ENCODE measurements at regions of chr13 and their contacts with region 1.

Region 1: GRCh38 chr13:25375727-25376358 is 4.1 kb downstream of the ATP8A2 start:
- DNase-seq: peak in 8 of 9 donors; percentile 8 to 50 (median 30)
- ATAC-seq: peak; percentile 57
- H3K4me3 ChIP-seq: no peak overlapping the region
- H3K4me3 Mint-ChIP-seq: peak overlapping the region in 1 of 10 donors; percentile 35
- H3K27ac ChIP-seq: no peak overlapping the region
- H3K27ac Mint-ChIP-seq: no peak overlapping the region
- H3K4me1 ChIP-seq: no peaks in the 10 kb centered on the region
- H3K4me1 Mint-ChIP-seq: peaks cover 5 to 18% (median 13%) of the 10 kb centered on the region in 7 donors
- H3K27me3 ChIP-seq: peaks cover 0 to 3% of the 10 kb centered on the region in 2 donors
- H3K27me3 Mint-ChIP-seq: peaks cover 51 to 62% (median 57%) of the 10 kb centered on the region in 5 donors

Region 2: DNA sequence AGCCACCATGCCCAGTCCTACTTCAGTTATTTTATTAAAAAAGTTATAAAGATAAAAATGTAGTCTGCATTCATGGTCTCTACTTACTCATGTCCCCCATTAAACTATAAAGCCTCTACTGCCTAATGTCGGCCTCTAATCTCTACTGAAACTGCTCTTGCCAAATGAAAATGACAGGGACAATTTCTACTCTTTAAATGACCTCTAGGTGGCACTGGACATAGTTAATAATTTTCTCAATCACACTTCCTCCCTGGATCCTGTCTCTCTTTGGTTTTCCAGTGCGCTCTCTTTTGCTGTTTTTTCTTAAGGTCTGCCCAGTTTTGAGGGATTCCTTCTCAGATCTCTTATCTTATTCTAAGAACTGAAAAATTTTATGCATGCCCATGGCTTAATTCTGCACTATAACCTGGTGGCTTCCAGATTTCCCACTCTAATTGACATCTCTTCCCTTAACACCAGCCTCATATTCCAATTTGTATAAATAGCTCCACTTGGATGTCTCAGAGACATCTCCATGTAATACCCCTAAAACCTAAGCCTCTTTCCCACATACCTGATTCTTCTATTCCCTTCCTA is 142.8 kb before region 1 on chr13:
- CTCF ChIA-PET with region 1: interaction called, 8 read pairs
- POLR2A ChIA-PET with region 1: no interaction called
- intact Hi-C with region 1: loop called (anchors 1 kb)
- DNase-seq: peak in 2 of 9 donors; percentile 5 to 7
- ATAC-seq: peak; percentile 62
- H3K4me3 ChIP-seq: no peak overlapping the region
- H3K4me3 Mint-ChIP-seq: no peak overlapping the region
- H3K27ac ChIP-seq: no peak overlapping the region
- H3K27ac Mint-ChIP-seq: no peak overlapping the region
- H3K4me1 ChIP-seq: no peaks in the 10 kb centered on the region
- H3K4me1 Mint-ChIP-seq: peaks cover 0 to 8% (median 7%) of the 10 kb centered on the region in 7 donors
- H3K27me3 ChIP-seq: no peaks in the 10 kb centered on the region
- H3K27me3 Mint-ChIP-seq: peaks cover 2 to 17% (median 6%) of the 10 kb centered on the region in 5 donors

Region 3: DNA sequence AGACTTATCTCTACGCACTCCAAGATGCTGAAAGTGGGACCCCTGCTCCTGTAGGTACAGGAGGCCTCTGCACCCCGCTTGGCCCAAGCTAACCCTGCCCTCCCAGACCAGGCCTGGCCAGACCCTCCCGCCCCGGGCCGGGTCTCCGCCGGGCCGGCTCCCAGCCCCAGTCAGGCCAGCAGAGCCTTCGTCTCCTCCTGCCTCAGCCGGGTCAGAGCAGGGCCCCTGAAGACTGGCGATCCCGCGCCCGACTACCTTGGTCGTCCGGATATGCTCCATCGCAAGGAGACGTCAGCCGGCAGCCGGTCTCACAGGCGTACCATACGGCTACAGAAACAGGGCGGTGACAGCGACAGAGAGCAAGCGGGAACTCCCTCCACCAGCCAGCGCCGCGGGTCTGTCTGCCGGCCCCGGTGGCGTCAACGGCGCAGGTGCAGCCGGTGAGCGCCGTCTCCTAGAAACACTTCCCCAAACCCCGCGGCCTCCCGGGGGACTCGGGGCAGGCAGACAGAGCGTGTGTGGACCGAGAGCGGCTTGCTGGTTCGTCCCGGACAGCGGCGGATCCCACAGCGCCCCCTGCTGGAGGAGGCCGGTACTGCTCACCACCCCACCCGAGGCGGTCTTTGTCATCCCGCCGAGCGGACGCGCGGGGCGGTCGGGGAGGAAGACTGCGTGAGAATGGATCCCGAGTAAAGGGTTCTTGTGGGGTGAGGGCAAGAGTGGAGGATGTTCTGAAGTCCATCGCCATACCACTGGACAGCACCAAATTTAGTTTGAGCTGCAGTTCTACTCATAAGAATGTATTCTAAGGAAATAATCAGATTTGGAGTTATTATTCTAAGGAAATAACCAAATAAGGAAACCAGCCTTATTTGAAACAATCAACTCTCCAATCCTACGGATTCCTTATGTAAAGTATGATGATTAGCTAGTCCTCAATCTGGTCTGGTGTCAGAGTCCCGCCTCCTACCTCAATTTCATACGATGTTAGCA is 88.6 kb before region 1 on chr13 and contains the start of gene MTMR6:
- CTCF ChIA-PET with region 1: no interaction called
- POLR2A ChIA-PET with region 1: no interaction called
- intact Hi-C with region 1: no loop called
- DNase-seq: peak; percentile 90 to 98 (median 93)
- ATAC-seq: peak; percentile 96
- H3K4me3 ChIP-seq: peak within 1 kb of the TSS; percentile 85
- H3K4me3 Mint-ChIP-seq: peak within 1 kb of the TSS; percentile 94 to 100 (median 96)
- H3K27ac ChIP-seq: peak within 1 kb of the TSS; percentile 100
- H3K27ac Mint-ChIP-seq: peak within 1 kb of the TSS; percentile 92 to 99 (median 97)
- H3K4me1 ChIP-seq: peaks cover 12 to 24% of the 10 kb centered on the region in 2 donors
- H3K4me1 Mint-ChIP-seq: peaks cover 23 to 58% (median 50%) of the 10 kb centered on the region in 7 donors
- H3K27me3 ChIP-seq: peaks cover 0 to 3% of the 10 kb centered on the region in 2 donors
- H3K27me3 Mint-ChIP-seq: peaks cover 0 to 17% (median 10%) of the 10 kb centered on the region in 5 donors
- total RNA-seq, gene MTMR6: 16.0 to 23.2 (median 18.5) TPM

Region 4: DNA sequence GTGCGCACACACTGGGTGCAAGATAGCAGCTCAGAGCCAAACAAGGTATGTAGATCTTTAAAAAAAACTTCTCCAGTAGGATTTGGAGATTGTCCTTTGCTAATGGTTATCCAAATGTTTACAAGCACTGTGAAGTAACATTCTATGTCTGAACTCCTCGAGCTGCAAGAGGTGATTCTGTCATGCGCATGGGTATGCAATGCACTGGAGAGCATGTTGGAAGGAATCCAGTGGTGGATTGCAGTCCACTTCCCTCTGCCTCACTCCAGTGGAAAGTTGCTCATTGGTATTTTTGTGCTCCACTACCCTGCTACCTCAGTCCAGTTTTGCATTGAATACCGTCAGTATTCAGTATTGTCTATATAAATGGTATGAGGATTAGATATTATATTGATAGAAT is 128.0 kb after region 1 on chr13:
- CTCF ChIA-PET with region 1: no interaction called
- POLR2A ChIA-PET with region 1: no interaction called
- intact Hi-C with region 1: no loop called
- DNase-seq: no peak
- ATAC-seq: no peak
- H3K4me3 ChIP-seq: no peak overlapping the region
- H3K4me3 Mint-ChIP-seq: no peak overlapping the region
- H3K27ac ChIP-seq: no peak overlapping the region
- H3K27ac Mint-ChIP-seq: no peak overlapping the region
- H3K4me1 ChIP-seq: no peaks in the 10 kb centered on the region
- H3K4me1 Mint-ChIP-seq: no peaks in the 10 kb centered on the region
- H3K27me3 ChIP-seq: no peaks in the 10 kb centered on the region
- H3K27me3 Mint-ChIP-seq: peaks cover 6 to 53% (median 25%) of the 10 kb centered on the region in 5 donors